ENCODE measurements at regions of chr1 and their contacts with region 1.

Region 1: GRCh38 chr1:64823691-64824476 is 79.0 kb downstream of the RAVER2 start:
- H3K4me3 Mint-ChIP-seq: peak overlapping the region; percentile 32
- H3K27ac Mint-ChIP-seq: no peak overlapping the region
- H3K4me1 Mint-ChIP-seq: peaks cover 11% of the 10 kb centered on the region
- H3K27me3 Mint-ChIP-seq: no peaks in the 10 kb centered on the region

Region 2: DNA sequence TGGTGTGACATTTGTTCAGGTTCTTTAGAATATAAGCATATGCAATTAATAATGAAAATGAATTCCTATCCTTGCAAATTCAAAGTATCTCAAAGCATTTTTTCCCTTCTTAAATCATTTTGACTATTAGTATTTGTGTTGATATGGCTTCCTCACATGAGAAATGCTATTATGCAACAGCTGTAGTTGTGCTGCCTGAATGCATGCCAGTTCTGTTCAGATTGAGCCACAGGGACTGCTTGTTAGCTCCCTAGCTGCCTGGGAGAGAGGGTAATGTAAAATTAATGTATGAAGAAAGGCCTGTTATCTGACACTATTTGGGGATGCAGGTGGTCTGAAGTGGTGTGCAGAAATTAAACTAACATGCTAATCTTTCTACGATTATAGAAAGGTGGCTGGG is 308.5 kb before region 1 on chr1:
- intact Hi-C with region 1: loop called (anchors 10 kb)
- H3K4me3 Mint-ChIP-seq: no peak overlapping the region
- H3K27ac Mint-ChIP-seq: no peak overlapping the region
- H3K4me1 Mint-ChIP-seq: peaks cover 29% of the 10 kb centered on the region
- H3K27me3 Mint-ChIP-seq: no peaks in the 10 kb centered on the region

Region 3: DNA sequence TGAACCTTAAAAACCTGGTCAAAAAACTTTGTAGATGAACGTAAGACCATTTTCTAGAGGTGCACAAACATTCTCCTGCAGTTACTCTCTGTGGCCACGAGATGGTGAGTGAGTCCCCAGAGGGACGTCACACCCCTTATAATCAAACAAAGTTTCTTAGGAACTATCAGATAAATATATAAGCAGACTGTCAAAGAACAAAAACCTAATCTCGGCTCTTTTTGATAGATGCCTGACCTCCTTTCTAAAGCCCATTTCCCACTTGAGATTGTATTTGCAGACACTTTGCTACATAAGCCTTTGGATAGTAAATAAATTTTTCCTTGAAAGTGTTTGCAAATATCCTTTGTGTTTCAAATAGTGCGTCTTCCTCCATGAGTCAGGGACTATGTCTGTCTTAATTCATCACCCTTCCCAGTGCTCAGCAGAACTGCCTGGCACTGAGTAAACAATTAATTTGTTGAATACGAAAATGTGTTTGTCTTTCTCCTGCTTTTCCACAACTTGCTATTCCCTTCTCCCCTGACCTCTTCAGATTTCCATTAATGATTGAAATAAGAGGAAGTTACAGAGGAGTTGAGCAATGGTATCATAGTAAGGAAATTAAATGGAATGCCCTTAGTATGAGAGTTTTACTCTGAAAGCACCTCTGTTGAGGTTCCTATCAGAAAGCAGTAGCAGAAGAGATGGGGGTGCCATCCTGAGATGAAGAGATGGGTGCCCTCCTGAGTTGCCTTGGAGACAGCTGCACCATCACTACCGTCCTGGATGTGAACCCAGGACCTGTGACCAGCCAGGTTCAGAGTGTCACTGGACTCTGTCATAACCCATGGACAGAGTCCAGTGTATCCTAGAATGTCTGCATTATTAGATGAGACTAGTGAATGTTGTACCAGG is 136.8 kb before region 1 on chr1:
- intact Hi-C with region 1: loop called (anchors 5 kb)
- H3K4me3 Mint-ChIP-seq: no peak overlapping the region
- H3K27ac Mint-ChIP-seq: peak overlapping the region; percentile 80
- H3K4me1 Mint-ChIP-seq: peaks cover 34% of the 10 kb centered on the region
- H3K27me3 Mint-ChIP-seq: no peaks in the 10 kb centered on the region

Region 4: GRCh38 chr1:64744492-64745180 is 79.2 kb before region 1 on chr1 and contains the start of gene RAVER2:
- intact Hi-C with region 1: loop called (anchors 1 kb)
- H3K4me3 Mint-ChIP-seq: peak within 1 kb of the TSS; percentile 84
- H3K27ac Mint-ChIP-seq: peak within 1 kb of the TSS; percentile 53
- H3K4me1 Mint-ChIP-seq: peaks cover 14% of the 10 kb centered on the region
- H3K27me3 Mint-ChIP-seq: peaks cover 15% of the 10 kb centered on the region

Region 5: GRCh38 chr1:65177457-65177856 is 353.6 kb after region 1 on chr1:
- intact Hi-C with region 1: no loop called
- H3K4me3 Mint-ChIP-seq: no peak overlapping the region
- H3K27ac Mint-ChIP-seq: no peak overlapping the region
- H3K4me1 Mint-ChIP-seq: peaks cover 63% of the 10 kb centered on the region
- H3K27me3 Mint-ChIP-seq: peaks cover 3% of the 10 kb centered on the region